Posterior vena cava (tissue), 2 donors: ENCODE measurements at regions of chr5 and their contacts with region 1.

Region 1: DNA sequence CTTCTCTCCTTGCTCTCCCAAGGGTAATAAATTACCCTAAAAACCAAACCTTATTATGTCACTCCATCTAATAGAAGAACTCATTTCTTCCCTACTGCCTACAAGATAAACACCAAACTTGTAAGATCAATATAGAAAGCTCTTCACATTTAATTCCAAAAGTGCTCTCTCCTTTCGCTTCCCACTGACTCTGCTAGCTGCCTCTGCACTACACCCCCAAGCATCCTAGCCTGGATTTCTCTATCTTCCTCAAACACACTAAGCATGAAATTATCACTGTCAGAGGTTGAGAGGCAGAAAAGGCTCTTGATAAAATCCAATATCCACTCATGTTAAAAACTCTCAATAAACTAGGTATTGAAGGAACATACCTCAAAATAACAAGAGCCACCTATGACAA is 162.4 kb downstream of the KCNN2 start:
- DNase-seq: no peak

Region 2: GRCh38 chr5:113891491-113891890 is 632.7 kb before region 1 on chr5:
- intact Hi-C with region 1: loop called in 1 of 2 experiments (anchors 2 kb)
- DNase-seq: no peak

Region 3: GRCh38 chr5:114695292-114695904 is 171.2 kb after region 1 on chr5:
- intact Hi-C with region 1: no loop called
- DNase-seq: no peak